Activated T-helper 2 cell treated with anti-CD3 and anti-CD28 coated beads, Interferon-gamma antibody, Interleukin-2, Interleukin-4, amounts not matched to agents 10 μg/mL and 5 μg/mL and 100 μg/mL, durations not matched to agents 14 hours and 24 hours and 36 hours (primary cell): ENCODE measurements at regions of chr5 and their contacts with region 1.

Region 1: GRCh38 chr5:141420855-141421496 is at the start of gene PCDHGA11:
- DNase-seq: no peak
- H3K4me3 Mint-ChIP-seq: peak within 1 kb of the TSS; percentile 81
- H3K27ac Mint-ChIP-seq: no peak within 1 kb of the TSS
- H3K4me1 Mint-ChIP-seq: peaks cover 10% of the 10 kb centered on the region
- H3K27me3 Mint-ChIP-seq: peaks cover 63% of the 10 kb centered on the region
- total RNA-seq, gene PCDHGA11: 0.21 and 0.39 TPM in 2 replicates

Region 2: GRCh38 chr5:141338538-141339306 is 82.3 kb before region 1 on chr5 and contains the start of gene PCDHGA2:
- intact Hi-C with region 1: loop called (anchors 5 kb)
- DNase-seq: no peak
- H3K4me3 Mint-ChIP-seq: peak within 1 kb of the TSS; percentile 73
- H3K27ac Mint-ChIP-seq: no peak within 1 kb of the TSS
- H3K4me1 Mint-ChIP-seq: peaks cover 3% of the 10 kb centered on the region
- H3K27me3 Mint-ChIP-seq: peaks cover 34% of the 10 kb centered on the region
- total RNA-seq, gene PCDHGA2: 0.09 and 0.11 TPM in 2 replicates

Region 3: DNA sequence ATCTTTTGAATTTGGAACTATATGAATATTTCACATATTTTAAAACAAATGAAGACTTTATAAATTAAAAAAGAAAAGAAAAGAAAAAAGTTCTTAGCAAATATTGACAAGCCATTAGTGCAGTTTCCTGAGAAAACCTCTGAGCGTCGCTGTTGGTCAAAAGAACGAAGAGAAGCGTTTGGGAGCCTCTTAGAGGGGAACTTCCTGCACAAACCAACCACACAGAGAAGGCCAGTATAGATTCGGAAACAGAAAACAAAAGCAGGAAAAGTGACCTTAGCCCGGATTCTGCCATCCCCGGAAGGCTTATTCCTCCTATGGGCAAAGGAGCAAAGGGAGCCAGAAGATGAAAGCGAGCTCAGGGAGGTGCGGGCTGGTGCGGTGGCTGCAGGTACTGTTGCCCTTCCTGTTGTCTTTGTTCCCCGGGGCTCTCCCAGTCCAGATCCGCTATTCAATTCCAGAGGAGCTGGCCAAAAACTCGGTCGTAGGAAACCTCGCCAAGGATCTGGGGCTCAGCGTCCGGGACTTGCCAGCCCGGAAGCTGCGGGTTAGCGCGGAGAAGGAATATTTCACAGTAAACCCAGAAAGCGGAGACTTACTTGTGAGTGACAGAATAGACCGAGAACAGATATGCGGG is 61.1 kb before region 1 on chr5 and contains the start of gene PCDHGB2:
- intact Hi-C with region 1: loop called (anchors 5 kb)
- DNase-seq: no peak
- H3K4me3 Mint-ChIP-seq: peak within 1 kb of the TSS; percentile 85
- H3K27ac Mint-ChIP-seq: peak within 1 kb of the TSS; percentile 62
- H3K4me1 Mint-ChIP-seq: peaks cover 2% of the 10 kb centered on the region
- H3K27me3 Mint-ChIP-seq: peaks cover 34% of the 10 kb centered on the region
- total RNA-seq, gene PCDHGB2: 0.85 and 0.91 TPM in 2 replicates

Region 4: GRCh38 chr5:141402553-141403260 is 18.3 kb before region 1 on chr5 and contains the start of gene PCDHGA9:
- intact Hi-C with region 1: no loop called
- DNase-seq: no peak
- H3K4me3 Mint-ChIP-seq: no peak within 1 kb of the TSS
- H3K27ac Mint-ChIP-seq: no peak within 1 kb of the TSS
- H3K4me1 Mint-ChIP-seq: no peaks in the 10 kb centered on the region
- H3K27me3 Mint-ChIP-seq: peaks cover 30% of the 10 kb centered on the region
- total RNA-seq, gene PCDHGA9: 0.23 and 0.32 TPM in 2 replicates

Region 5: DNA sequence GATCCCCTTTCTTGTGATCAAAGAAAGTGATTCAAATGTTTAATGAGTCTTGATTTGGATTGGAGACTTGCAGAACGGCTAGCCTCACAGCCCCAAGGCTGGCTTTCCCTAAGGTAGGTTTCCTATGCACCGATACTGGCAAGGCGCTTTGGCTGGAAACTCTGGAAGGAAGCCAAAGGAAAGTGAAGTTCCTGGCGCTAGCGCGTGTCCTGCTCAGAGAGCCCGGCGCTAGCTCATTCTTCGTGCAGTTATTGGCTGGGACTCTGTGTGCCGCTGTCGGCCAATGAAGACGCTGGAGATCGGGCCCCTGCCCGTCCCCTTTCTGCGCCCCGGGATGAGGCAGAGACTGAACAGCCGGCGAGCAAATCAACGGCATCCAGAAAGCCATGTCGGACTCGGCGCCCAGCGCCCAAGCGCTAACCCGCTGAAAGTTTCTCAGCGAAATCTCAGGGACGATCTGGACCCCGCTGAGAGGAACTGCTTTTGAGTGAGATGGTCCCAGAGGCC is 54.7 kb after region 1 on chr5 and contains the start of gene PCDHGC3:
- intact Hi-C with region 1: loop called (anchors 5 kb)
- DNase-seq: no peak
- H3K4me3 Mint-ChIP-seq: peak within 1 kb of the TSS; percentile 85
- H3K27ac Mint-ChIP-seq: no peak within 1 kb of the TSS
- H3K4me1 Mint-ChIP-seq: peaks cover 12% of the 10 kb centered on the region
- H3K27me3 Mint-ChIP-seq: peaks cover 71% of the 10 kb centered on the region
- total RNA-seq, gene PCDHGC3: 0.21 and 0.23 TPM in 2 replicates

Region 6: DNA sequence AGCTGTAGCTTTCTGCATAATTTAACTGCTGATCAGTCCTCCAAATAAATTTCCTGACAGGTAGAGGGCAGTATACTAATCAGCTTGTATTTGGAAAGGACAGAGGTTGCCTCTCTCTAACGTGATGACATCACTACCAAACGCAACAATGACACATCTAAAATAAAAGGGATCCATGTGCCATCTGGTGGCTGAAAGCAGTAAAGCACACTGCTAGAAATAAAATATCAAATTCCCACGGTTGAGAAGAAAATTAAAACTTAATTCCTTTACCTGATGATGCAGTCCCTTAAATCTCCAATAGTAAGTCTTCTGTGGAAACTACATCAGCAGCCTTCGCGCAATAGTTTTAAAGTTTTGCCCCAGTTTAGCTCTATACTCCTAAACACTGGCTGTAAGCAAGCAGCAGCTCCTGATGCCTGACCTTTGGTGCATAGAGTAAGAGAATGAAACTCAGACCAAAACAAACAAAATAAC is 143.3 kb after region 1 on chr5:
- intact Hi-C with region 1: loop called (anchors 2 kb)
- DNase-seq: peak; percentile 60
- H3K4me3 Mint-ChIP-seq: no peak overlapping the region
- H3K27ac Mint-ChIP-seq: peak overlapping the region; percentile 85
- H3K4me1 Mint-ChIP-seq: peaks cover 23% of the 10 kb centered on the region
- H3K27me3 Mint-ChIP-seq: no peaks in the 10 kb centered on the region

Region 7: DNA sequence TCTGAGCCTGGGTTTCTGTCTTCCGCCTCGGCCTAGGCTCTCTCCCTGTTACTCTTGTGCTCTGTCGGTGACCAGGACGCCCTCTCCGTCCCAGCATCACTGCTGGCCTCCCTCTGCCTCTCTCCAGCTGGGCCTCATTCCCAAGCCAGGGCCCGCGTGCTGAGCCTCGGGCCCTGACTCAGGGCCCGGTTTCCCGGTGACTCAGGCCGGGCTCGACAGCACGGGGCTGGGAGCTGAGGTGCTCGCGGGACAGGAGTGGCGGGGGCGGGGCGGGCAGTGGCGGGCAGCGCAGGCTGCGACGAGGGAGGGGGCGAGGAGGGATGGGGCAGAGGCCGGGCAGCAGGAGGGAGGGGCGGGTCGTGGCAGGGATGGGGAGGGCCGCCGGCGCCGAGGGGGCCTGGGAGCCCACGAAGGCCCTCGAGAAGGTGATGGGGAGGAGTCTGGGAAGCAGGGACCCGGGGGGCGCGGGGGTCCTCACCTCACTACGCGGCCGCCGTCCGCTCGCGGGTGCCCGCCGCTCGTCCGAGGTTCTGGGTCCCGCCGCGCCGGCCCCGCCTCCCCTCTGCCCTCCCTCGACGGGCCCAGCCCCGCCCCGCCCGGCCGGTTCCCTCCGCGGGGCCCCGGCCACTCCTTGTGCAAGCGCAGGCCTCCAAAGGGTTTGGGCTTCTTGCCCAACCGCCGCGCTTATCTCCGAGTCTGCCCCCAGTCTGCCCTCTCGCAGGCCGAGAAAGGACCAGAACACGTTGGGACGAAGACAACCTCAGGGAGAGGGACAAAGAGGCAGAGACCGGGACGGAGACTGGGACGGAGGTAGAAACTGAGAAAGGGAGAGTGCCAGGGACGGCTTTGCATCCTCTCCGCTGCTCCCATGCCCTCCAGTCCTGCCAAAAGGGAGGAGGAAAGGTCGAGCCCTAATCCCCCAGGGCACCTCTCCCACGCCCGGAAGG is 261.0 kb after region 1 on chr5 and contains the start of gene ARAP3:
- intact Hi-C with region 1: no loop called
- DNase-seq: no peak
- H3K4me3 Mint-ChIP-seq: peak within 1 kb of the TSS; percentile 78
- H3K27ac Mint-ChIP-seq: peak within 1 kb of the TSS; percentile 63
- H3K4me1 Mint-ChIP-seq: peaks cover 18% of the 10 kb centered on the region
- H3K27me3 Mint-ChIP-seq: no peaks in the 10 kb centered on the region
- total RNA-seq, gene ARAP3: 9.9 and 10.5 TPM in 2 replicates